PC-3 (cell line): ENCODE measurements at regions of chr1 and their contacts with region 1.

Region 1: GRCh38 chr1:218345673-218346390 is 696 bp downstream of the TGFB2 start:
- DNase-seq: peak; percentile 89
- ATAC-seq: peak; percentile 53
- H3K4me3 ChIP-seq: peak overlapping the region; percentile 78
- H3K27ac ChIP-seq: peak overlapping the region; percentile 84
- H3K4me1 ChIP-seq: peaks cover 35% of the 10 kb centered on the region
- H3K27me3 ChIP-seq: no peaks in the 10 kb centered on the region
- CTCF ChIP-seq: no peak

Region 2: GRCh38 chr1:217089361-217090014 is 1256.3 kb before region 1 on chr1:
- CTCF ChIA-PET with region 1: no interaction called
- POLR2A ChIA-PET with region 1: interaction called, 26 read pairs
- intact Hi-C with region 1: no loop called
- DNase-seq: peak; percentile 82
- ATAC-seq: peak; percentile 90
- H3K4me3 ChIP-seq: peak overlapping the region; percentile 84
- H3K27ac ChIP-seq: peak overlapping the region; percentile 54
- H3K4me1 ChIP-seq: peaks cover 17% of the 10 kb centered on the region
- H3K27me3 ChIP-seq: no peaks in the 10 kb centered on the region
- CTCF ChIP-seq: no peak

Region 3: DNA sequence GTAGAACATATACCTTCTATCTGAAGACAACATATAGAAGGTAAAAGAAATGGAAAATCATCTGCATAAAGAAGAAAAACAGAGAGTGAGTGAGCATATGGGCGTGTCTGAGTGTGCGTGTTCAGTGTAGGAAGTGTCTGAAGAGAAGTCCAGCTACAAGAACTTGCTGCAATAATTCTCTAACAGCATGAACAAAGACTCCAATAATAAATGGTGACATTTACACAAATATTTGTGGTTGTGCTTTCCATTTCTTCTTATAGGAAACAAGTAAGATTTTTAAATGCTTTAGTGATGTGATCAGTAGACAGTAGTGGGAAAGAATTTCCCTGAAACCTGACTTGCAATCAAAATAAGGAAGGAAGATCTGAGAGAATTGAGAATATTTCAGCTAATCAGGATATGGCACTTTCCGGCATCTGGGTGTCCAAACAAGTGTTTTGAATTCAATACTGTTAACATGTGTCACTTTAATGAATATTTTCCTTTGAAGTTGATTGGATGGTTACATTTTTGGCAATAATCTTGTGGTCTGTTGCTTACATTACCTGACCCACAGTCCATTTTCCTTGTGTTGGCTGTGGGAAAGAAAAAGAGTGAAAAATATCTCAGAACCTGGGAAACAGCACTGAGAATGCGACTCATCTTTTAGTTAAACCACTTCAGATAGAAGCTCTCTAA is 153.3 kb after region 1 on chr1:
- CTCF ChIA-PET with region 1: no interaction called
- POLR2A ChIA-PET with region 1: no interaction called
- intact Hi-C with region 1: loop called (anchors 1 kb)
- DNase-seq: peak; percentile 83
- ATAC-seq: peak; percentile 29
- H3K4me3 ChIP-seq: peak overlapping the region; percentile 51
- H3K27ac ChIP-seq: peak overlapping the region; percentile 74
- H3K4me1 ChIP-seq: peaks cover 47% of the 10 kb centered on the region
- H3K27me3 ChIP-seq: no peaks in the 10 kb centered on the region
- CTCF ChIP-seq: no peak

Region 4: GRCh38 chr1:218658899-218659298 is 313.1 kb after region 1 on chr1:
- CTCF ChIA-PET with region 1: no interaction called
- POLR2A ChIA-PET with region 1: no interaction called
- intact Hi-C with region 1: loop called (anchors 5 kb)
- DNase-seq: peak; percentile 95
- ATAC-seq: peak; percentile 72
- H3K4me3 ChIP-seq: no peak overlapping the region
- H3K27ac ChIP-seq: peak overlapping the region; percentile 71
- H3K4me1 ChIP-seq: peaks cover 64% of the 10 kb centered on the region
- H3K27me3 ChIP-seq: no peaks in the 10 kb centered on the region
- CTCF ChIP-seq: no peak

Region 5: DNA sequence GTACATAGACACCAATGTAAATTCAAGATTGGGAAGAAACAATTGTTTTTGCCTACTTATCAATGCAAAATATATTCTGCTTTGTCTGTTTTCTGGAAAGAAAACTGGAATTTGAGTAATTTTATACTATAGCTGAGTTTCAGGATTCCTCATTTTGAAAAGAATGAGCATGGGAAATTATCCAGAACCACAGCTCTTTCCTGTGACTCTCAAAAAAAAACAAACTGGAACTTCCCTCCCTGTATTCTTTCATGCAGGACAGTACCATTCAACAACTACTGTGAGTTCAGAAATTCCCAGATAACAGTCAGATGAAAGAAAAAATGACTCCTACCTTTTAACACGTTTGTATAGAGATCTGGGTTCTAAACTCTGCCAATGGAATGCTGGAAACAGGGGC is 371.7 kb after region 1 on chr1:
- CTCF ChIA-PET with region 1: no interaction called
- POLR2A ChIA-PET with region 1: no interaction called
- intact Hi-C with region 1: no loop called
- DNase-seq: no peak
- ATAC-seq: no peak
- H3K4me3 ChIP-seq: no peak overlapping the region
- H3K27ac ChIP-seq: no peak overlapping the region
- H3K4me1 ChIP-seq: no peaks in the 10 kb centered on the region
- H3K27me3 ChIP-seq: no peaks in the 10 kb centered on the region
- CTCF ChIP-seq: no peak

Region 6: DNA sequence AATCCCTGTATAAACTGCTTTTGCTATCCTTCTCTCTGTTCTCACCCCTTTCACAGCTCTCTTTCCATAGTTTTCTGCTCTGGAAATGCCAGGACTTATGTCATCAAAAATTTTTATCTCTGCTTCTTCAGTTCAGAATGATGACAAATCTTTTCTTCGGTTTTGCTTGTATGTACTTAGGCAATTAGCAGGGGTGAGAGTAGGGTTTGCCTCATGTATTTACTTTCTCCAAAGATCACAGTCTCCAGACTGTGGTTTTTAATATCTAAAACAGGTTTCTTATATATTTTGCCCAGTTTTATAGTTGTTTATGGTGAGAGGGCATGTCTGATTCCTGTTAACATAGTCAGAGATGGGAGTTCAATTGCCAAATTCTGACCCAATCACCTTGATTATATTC is 592.4 kb after region 1 on chr1:
- CTCF ChIA-PET with region 1: no interaction called
- POLR2A ChIA-PET with region 1: no interaction called
- intact Hi-C with region 1: loop called (anchors 5 kb)
- DNase-seq: peak; percentile 83
- ATAC-seq: peak; percentile 72
- H3K4me3 ChIP-seq: no peak overlapping the region
- H3K27ac ChIP-seq: peak overlapping the region; percentile 70
- H3K4me1 ChIP-seq: peaks cover 24% of the 10 kb centered on the region
- H3K27me3 ChIP-seq: no peaks in the 10 kb centered on the region
- CTCF ChIP-seq: no peak

Region 7: DNA sequence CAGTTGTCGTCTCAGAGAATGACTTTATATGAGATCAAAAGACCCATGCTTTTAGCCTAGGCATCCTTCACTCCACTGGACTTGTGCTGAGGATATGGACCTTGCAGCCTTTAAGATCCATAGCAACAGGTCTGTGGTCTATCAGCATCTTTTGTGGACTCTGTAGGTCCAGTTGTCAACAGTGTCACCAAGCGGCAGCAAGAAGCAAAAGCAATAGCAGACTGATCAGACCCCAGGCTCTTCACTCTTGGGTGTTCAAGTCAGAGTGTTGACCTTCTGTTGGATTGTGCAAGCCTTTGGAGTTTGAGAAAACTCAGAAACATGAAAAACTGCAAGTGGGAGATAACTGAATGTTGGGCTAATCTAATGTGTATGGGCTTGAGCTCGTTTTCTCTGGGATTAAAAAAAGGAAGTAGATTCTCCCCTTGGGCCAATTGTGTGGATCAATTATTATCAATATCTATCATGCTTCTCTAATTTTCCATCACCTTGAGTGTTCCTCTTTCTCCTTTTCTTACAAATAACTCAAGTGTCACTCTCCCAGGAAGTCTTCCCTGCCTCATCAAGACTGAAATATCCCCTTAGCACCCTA is 972.0 kb after region 1 on chr1:
- CTCF ChIA-PET with region 1: no interaction called
- POLR2A ChIA-PET with region 1: no interaction called
- intact Hi-C with region 1: loop called (anchors 5 kb)
- DNase-seq: peak; percentile 82
- ATAC-seq: peak; percentile 59
- H3K4me3 ChIP-seq: no peak overlapping the region
- H3K27ac ChIP-seq: no peak overlapping the region
- H3K4me1 ChIP-seq: peaks cover 16% of the 10 kb centered on the region
- H3K27me3 ChIP-seq: no peaks in the 10 kb centered on the region
- CTCF ChIP-seq: peak; percentile 98